ENCODE measurements at regions of chr1 and their contacts with region 1.

Region 1: GRCh38 chr1:221166559-221167318 is 287.5 kb downstream of the HLX start:
- DNase-seq: peak; percentile 53
- ATAC-seq: peak; percentile 92
- H3K4me3 ChIP-seq: no peak overlapping the region
- H3K27ac ChIP-seq: 0 out of 2 replicates have a peak overlapping the region, but pooled peaks have one; percentile 8
- H3K4me1 ChIP-seq: peaks cover 15% of the 10 kb centered on the region
- H3K27me3 ChIP-seq: 0 out of 4 replicates have a peak, but pooled peaks cover 0 to 2% of the 10 kb centered on the region in 2 experiments
- CTCF ChIP-seq: no peak
- EP300 ChIP-seq: peak; percentile 63 to 75; a peak in 3 of 4 replicates
- POLR2A ChIP-seq: no peak
- RAD21 ChIP-seq: no peak

Region 2: GRCh38 chr1:221105578-221105977 is 61.2 kb before region 1 on chr1:
- CTCF ChIA-PET with region 1: no interaction called
- POLR2A ChIA-PET with region 1: no interaction called
- RAD21 ChIA-PET with region 1: no interaction called
- SMC1A ChIA-PET with region 1: no interaction called
- in situ Hi-C with region 1: no loop called
- intact Hi-C with region 1: no loop called
- DNase-seq: no peak
- ATAC-seq: peak; percentile 48
- H3K4me3 ChIP-seq: no peak overlapping the region
- H3K27ac ChIP-seq: no peak overlapping the region
- H3K4me1 ChIP-seq: no peaks in the 10 kb centered on the region
- H3K27me3 ChIP-seq: no peaks in the 10 kb centered on the region
- CTCF ChIP-seq: no peak
- EP300 ChIP-seq: no peak
- POLR2A ChIP-seq: no peak
- RAD21 ChIP-seq: no peak

Region 3: DNA sequence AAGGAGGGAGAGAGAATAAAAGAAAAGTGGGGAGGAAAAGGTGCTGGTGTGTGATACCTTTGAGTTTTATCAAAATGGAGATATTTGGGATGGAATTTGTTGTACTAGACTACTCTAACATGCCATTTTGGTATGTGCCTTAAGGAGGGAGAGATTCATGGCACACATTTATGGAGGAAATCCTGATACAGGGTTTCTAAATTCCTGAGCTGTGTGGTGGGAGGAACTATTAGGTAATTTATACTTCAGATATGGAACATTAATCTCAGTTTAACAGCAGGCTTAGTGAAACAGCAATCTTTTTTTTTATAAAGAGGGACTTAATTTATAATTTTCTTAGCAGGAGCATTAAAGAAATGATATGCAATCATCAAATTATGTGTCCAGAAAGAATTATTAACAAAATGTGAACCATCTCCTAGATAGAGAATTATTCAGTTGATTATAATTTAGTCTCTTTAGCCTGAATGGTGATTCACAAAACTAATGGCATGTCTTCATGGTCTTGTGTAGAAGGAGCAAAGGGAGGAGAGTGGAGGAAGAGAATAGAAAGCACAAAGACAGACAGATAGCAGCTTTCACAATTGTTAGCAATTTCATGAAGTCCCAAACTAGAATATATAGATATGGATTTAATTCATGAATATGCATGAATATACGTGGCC is 14.1 kb after region 1 on chr1:
- CTCF ChIA-PET with region 1: interaction called, 15 read pairs
- POLR2A ChIA-PET with region 1: interaction called, 3 read pairs
- RAD21 ChIA-PET with region 1: interaction called, 4 read pairs
- SMC1A ChIA-PET with region 1: interaction called, 22 read pairs
- in situ Hi-C with region 1: no loop called
- intact Hi-C with region 1: no loop called
- DNase-seq: no peak
- ATAC-seq: no peak
- H3K4me3 ChIP-seq: no peak overlapping the region
- H3K27ac ChIP-seq: no peak overlapping the region
- H3K4me1 ChIP-seq: no peaks in the 10 kb centered on the region
- H3K27me3 ChIP-seq: no peaks in the 10 kb centered on the region
- CTCF ChIP-seq: no peak
- EP300 ChIP-seq: no peak
- POLR2A ChIP-seq: no peak
- RAD21 ChIP-seq: no peak

Region 4: GRCh38 chr1:221187174-221187573 is 20.4 kb after region 1 on chr1:
- CTCF ChIA-PET with region 1: no interaction called
- POLR2A ChIA-PET with region 1: interaction called, 3 read pairs
- RAD21 ChIA-PET with region 1: no interaction called
- SMC1A ChIA-PET with region 1: interaction called, 15 read pairs
- in situ Hi-C with region 1: no loop called
- intact Hi-C with region 1: no loop called
- DNase-seq: no peak
- ATAC-seq: peak; percentile 69
- H3K4me3 ChIP-seq: no peak overlapping the region
- H3K27ac ChIP-seq: no peak overlapping the region
- H3K4me1 ChIP-seq: no peaks in the 10 kb centered on the region
- H3K27me3 ChIP-seq: no peaks in the 10 kb centered on the region
- CTCF ChIP-seq: no peak
- EP300 ChIP-seq: no peak
- POLR2A ChIP-seq: no peak
- RAD21 ChIP-seq: no peak